ENCODE measurements at regions of chr15 and their contacts with region 1.

Region 1: DNA sequence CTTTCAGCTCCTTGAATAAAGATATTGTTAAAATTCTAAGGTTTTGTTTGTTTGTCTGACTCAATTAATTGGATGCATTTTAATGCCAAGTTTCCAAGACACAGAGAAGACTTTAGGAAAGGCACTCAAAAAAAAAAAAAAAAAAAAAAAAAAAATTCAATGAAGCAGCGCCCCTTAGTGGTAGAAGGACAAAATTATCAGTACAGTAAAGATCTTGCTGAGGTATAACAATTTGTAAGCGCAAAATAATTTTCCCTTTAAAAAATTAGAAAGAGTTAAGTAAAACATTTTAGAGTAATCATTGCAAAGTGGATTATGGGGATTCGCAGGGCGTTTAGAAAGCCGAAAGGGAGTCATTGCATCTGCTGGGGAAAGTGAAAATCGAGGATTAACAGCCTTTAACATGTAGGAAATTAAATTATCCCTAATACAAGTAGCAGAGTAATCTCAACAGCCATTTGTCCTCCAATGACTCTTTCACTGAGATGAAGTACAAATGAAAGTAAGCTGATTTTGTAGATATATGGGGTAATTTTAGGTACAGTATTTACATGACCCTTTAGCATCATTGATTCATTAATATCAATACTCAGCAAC is 5.8 kb upstream of the DIS3L start:
- DNase-seq: no peak
- H3K4me3 Mint-ChIP-seq: no peak overlapping the region
- H3K27ac Mint-ChIP-seq: no peak overlapping the region
- H3K4me1 Mint-ChIP-seq: peaks cover 20% of the 10 kb centered on the region
- H3K27me3 Mint-ChIP-seq: no peaks in the 10 kb centered on the region

Region 2: GRCh38 chr15:65980824-65981456 is 306.6 kb before region 1 on chr15:
- CTCF ChIA-PET with region 1: no interaction called
- intact Hi-C with region 1: loop called (anchors 5 kb)
- DNase-seq: peak; percentile 53
- H3K4me3 Mint-ChIP-seq: no peak overlapping the region
- H3K27ac Mint-ChIP-seq: no peak overlapping the region
- H3K4me1 Mint-ChIP-seq: peaks cover 11% of the 10 kb centered on the region
- H3K27me3 Mint-ChIP-seq: peaks cover 17% of the 10 kb centered on the region

Region 3: DNA sequence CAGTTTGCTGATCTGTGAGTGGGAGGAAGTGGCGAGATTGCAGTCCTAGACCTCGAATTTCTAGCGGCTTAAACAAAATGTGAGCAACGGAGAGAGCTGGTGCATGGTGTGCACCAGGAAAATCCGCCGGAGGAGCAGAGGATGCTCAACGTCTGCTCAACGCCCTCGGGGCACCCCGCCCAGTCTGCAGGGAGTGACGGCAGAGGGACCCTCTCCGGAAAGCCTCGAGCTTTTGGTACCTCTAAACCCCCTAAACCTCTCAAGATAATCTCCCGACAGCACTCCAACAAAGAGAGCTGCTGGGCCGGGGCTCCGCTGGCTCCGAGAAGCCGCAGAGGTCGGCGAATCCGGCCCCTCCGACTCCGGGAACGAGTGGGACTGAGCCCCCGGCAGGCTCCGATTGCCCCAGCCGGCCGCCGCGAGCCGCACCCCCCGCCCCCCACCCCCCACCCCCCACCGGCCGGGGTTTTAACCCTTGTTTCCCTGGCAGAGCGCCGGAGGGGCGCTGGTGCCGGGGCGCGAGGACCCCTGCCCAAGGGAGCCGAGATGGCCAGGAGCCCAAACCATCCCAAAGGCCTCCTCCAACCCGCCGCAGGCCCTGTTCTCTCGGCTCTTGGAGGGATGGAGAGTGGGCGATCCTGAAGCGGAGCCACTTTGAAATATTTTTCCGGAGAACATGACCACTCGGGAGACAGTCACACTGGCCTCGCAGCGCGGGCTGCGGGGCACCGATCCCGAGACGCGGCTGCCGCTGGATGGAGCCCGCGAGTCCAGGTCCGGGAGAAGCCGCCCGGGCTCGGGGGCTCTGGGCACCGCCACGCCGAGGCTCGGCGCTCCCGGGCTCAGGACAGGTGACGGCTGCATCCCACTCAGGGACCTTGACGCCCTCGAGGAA is 35.5 kb before region 1 on chr15:
- CTCF ChIA-PET with region 1: interaction called, 3 read pairs
- intact Hi-C with region 1: loop called (anchors 2 kb)
- DNase-seq: peak; percentile 64
- H3K4me3 Mint-ChIP-seq: peak overlapping the region; percentile 65
- H3K27ac Mint-ChIP-seq: no peak overlapping the region
- H3K4me1 Mint-ChIP-seq: peaks cover 10% of the 10 kb centered on the region
- H3K27me3 Mint-ChIP-seq: peaks cover 56% of the 10 kb centered on the region

Measured in activated naive CD4-positive, alpha-beta T cell treated with anti-CD3 and anti-CD28 coated beads for 36 hours (primary cell).